ENCODE measurements at regions of chr17 and their contacts with region 1.

Region 1: DNA sequence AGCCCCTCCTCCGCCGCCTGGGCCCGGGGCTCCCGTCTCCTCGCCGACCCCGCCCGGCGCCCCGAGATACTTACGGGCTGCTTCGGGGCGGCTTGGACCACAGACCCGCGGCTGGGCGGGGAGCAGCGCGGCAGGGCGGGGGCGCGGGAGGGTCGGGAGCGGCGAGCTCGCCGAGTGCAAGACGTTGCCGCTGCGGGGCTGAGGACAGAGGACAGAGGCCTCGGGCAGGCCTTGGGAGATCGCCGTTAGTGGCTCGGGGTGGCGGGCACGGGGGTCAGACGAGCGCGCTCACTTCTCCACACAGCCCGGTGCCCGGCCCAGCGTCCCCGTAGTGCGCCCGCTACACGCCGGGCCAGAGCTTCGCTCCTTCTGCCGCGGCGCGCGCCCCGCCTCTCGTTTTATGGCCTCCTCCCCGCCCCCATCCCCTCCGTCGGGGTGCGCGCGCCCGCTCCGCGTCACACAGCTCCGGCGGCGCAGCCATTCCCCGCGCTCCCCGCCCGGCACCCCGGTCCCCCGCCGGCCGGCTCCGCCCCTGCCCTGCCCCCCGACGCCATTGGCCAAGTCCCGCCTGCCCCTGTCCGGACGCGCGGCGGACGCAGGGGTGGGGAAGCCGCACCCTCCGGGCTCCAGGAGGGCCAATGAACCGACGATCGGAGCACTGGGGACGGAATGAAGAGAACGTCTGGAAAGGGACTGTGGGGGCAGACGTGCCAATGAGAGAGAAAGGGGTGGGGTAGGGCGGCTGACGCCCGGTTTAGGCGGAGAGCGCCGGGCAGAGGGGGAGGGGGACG is at the start of gene TOB1:
- DNase-seq: peak; percentile 98
- H3K4me3 Mint-ChIP-seq: peak within 1 kb of the TSS; percentile 100
- H3K27ac Mint-ChIP-seq: peak within 1 kb of the TSS; percentile 99
- H3K4me1 Mint-ChIP-seq: peaks cover 43% of the 10 kb centered on the region
- H3K27me3 Mint-ChIP-seq: no peaks in the 10 kb centered on the region
- total RNA-seq, gene TOB1: 42.3 to 44.1 TPM

Region 2: DNA sequence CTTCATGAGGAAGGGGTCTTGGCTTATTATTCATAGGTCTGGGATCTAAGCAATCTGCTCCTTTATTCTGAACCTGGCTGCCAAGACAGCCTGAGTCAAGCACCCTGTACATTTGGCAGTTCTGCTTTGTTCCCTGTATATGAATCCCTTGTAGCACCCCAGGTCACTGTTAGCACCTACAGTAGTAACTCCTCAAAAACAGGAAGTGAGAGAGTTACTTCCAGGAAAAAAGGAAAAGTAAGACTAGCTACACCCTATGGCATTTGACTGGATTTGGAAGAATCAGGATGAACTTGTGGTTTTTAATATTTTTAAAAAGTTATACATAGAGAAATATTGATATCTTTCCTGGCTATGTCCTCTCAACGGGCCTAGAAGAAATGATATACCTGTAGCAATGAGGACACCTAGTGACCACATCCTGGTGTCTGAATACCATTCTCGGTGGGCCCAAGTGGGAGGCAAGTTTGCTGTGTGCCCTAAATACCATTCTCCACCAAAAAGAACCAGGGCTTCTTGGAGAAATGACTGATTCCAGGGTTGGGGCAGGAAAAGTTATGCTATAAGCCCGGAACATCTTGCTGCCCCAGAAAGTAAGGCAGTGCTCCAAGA is 168.4 kb before region 1 on chr17:
- CTCF ChIA-PET with region 1: no interaction called
- POLR2A ChIA-PET with region 1: no interaction called
- intact Hi-C with region 1: no loop called
- DNase-seq: no peak
- H3K4me3 Mint-ChIP-seq: no peak overlapping the region
- H3K27ac Mint-ChIP-seq: peak overlapping the region; percentile 38
- H3K4me1 Mint-ChIP-seq: peaks cover 22% of the 10 kb centered on the region
- H3K27me3 Mint-ChIP-seq: no peaks in the 10 kb centered on the region

Region 3: DNA sequence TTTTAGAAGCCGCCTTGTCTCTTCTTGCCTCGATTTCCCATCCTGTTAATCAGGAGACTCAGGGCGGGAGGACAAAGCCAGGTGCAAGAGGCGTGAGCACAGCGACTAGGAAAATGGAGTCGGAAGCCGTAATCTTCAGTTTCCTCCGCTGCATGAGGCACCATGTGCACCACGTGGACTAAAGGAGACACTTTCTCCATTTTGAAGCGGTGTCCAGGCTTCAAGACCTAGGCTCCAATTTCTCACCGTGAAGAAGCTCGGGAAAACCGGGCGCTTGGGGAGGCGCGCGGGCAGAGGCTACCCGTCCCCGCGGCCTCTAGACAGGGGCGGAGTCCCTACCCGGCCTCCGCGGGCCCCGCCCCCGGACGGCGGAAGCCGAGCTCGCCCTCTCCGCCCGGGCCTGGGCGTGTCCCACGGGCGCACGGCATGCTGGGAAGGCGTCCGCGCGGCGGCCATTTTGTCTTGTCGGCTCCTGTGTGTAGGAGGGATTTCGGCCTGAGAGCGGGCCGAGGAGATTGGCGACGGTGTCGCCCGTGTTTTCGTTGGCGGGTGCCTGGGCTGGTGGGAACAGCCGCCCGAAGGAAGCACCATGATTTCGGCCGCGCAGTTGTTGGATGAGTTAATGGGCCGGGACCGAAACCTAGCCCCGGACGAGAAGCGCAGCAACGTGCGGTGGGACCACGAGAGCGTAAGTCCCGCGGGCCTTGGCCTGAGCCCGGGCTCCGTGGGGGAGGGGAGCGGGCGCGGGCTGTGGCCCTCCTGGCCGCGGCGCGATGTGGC is 146.8 kb before region 1 on chr17 and contains the start of gene LUC7L3:
- CTCF ChIA-PET with region 1: no interaction called
- POLR2A ChIA-PET with region 1: interaction called, 5 read pairs
- intact Hi-C with region 1: loop called (anchors 2 kb)
- DNase-seq: peak; percentile 96
- H3K4me3 Mint-ChIP-seq: peak within 1 kb of the TSS; percentile 97
- H3K27ac Mint-ChIP-seq: peak within 1 kb of the TSS; percentile 98
- H3K4me1 Mint-ChIP-seq: peaks cover 26% of the 10 kb centered on the region
- H3K27me3 Mint-ChIP-seq: no peaks in the 10 kb centered on the region
- total RNA-seq, gene LUC7L3: 120 to 137 TPM

Region 4: GRCh38 chr17:50904521-50905459 is 38.6 kb after region 1 on chr17:
- CTCF ChIA-PET with region 1: interaction called, 5 read pairs
- POLR2A ChIA-PET with region 1: interaction called, 44 read pairs
- intact Hi-C with region 1: no loop called
- DNase-seq: no peak
- H3K4me3 Mint-ChIP-seq: no peak overlapping the region
- H3K27ac Mint-ChIP-seq: peak overlapping the region; percentile 89
- H3K4me1 Mint-ChIP-seq: peaks cover 55% of the 10 kb centered on the region
- H3K27me3 Mint-ChIP-seq: no peaks in the 10 kb centered on the region

Region 5: DNA sequence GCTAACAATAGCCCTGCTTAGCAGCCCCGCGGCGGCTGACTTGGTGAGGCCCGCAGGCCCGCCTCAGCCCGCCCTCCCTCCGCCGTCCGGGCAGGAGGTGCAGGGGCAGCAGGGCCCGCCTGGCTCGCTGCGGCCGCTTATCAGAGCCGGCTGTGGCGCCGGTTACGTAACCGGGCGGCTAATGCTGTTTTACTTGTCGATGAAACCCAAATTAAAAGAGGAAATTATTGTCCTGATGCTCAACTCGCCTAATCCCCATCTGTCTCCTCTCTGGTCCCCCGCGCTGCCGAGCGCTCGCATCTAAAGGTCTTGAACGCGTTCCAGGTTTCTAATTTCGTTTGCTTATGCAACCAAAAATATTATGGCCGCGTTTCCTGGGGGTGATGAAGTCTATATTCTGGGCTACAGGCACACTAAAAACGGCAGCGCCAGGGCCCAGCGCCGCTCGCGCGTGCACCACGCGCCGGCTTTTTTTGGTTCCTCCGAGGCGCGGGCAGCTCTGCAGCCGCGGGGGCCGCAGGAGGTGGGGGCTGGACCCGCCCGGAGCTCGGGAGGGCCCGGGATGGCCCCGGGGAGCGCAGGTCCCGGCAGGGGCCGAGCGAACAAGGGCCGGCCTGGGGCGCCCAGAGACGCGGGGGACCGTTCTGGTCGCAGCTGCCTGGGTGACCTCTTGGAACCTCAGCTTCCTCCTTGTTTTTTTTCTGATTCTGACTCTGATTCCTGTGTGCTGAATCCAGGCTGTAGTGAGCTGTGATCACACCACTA is 65.1 kb after region 1 on chr17:
- CTCF ChIA-PET with region 1: interaction called, 3 read pairs
- POLR2A ChIA-PET with region 1: interaction called, 31 read pairs
- intact Hi-C with region 1: no loop called
- DNase-seq: peak; percentile 66
- H3K4me3 Mint-ChIP-seq: peak overlapping the region; percentile 75
- H3K27ac Mint-ChIP-seq: peak overlapping the region; percentile 62
- H3K4me1 Mint-ChIP-seq: peaks cover 15% of the 10 kb centered on the region
- H3K27me3 Mint-ChIP-seq: no peaks in the 10 kb centered on the region

Region 6: DNA sequence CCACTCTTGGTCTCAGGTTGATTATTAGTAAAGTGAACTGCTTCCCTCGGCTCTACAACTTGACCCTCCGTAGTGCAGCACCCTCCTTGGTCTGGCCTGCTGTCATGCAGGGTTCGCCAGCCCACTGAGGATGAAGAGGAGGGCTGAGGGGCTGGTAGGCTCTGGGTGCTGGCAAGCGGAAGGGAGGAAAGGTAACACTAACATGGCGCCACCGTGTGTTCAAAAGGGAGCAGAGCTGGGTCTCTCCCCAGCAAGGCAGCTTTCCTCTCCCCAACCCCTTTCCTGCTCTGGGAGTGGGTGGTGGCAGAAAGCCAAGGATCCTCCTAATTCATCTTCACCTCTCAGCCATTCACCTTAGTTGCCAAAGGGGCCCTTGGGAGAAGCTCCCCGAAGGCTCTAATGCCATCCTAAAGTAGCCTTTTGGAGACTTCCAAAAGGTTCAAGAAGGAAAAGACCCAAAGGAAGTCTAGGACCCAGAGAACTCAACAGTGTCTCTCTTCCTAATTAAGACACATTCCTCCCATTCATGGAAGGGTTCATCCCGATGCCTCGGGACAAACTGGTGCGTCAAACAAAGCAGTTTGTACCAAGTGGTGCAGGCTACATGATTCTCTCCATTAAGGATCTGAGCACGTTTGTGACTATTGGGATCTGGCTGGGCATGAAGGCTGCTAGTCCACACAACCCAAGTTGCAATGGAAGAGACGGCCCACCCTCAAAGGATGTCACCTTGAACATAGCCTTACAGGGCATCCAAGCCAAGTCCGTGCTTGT is 90.8 kb after region 1 on chr17:
- CTCF ChIA-PET with region 1: interaction called, 153 read pairs
- POLR2A ChIA-PET with region 1: interaction called, 11 read pairs
- intact Hi-C with region 1: loop called (anchors 1 kb)
- DNase-seq: peak; percentile 77
- H3K4me3 Mint-ChIP-seq: no peak overlapping the region
- H3K27ac Mint-ChIP-seq: peak overlapping the region; percentile 44
- H3K4me1 Mint-ChIP-seq: peaks cover 2% of the 10 kb centered on the region
- H3K27me3 Mint-ChIP-seq: no peaks in the 10 kb centered on the region

Region 7: GRCh38 chr17:51029568-51030463 is 163.6 kb after region 1 on chr17:
- CTCF ChIA-PET with region 1: no interaction called
- POLR2A ChIA-PET with region 1: no interaction called
- intact Hi-C with region 1: no loop called
- DNase-seq: no peak
- H3K4me3 Mint-ChIP-seq: peak overlapping the region; percentile 41
- H3K27ac Mint-ChIP-seq: peak overlapping the region; percentile 71
- H3K4me1 Mint-ChIP-seq: peaks cover 28% of the 10 kb centered on the region
- H3K27me3 Mint-ChIP-seq: no peaks in the 10 kb centered on the region

Region 8: DNA sequence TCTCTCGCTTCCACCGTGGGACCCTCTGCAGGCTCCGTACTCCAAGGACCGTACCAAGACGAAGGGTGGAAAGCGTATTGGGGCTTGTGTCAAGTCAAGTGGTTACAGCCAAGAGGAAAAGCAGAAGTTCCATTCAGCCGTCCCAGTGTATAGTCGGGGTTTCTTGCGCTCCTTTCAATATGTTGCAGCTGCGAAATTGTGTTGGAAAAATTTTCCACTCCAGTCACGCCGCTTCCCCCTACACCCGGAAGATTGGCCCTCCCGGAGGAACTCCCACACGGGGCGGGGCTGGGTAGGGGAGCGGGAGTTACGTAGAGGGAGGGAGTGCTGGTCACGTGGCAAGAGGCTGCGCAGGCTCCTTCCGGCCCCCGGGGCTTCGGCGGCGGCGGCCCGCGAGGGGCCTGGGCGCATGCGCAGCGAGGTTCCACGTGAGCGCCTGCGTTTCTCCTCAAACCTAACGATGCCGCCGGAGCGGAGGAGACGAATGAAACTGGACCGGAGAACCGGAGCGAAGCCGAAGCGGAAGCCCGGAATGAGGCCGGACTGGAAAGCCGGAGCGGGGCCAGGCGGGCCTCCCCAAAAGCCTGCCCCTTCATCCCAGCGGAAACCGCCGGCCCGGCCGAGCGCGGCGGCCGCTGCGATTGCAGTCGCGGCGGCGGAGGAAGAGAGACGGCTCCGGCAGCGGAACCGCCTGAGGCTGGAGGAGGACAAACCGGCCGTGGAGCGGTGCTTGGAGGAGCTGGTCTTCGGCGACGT is 394.1 kb after region 1 on chr17 and contains the start of gene UTP18:
- CTCF ChIA-PET with region 1: no interaction called
- POLR2A ChIA-PET with region 1: no interaction called
- intact Hi-C with region 1: loop called (anchors 2 kb)
- DNase-seq: peak; percentile 97
- H3K4me3 Mint-ChIP-seq: peak within 1 kb of the TSS; percentile 83
- H3K27ac Mint-ChIP-seq: peak within 1 kb of the TSS; percentile 98
- H3K4me1 Mint-ChIP-seq: peaks cover 63% of the 10 kb centered on the region
- H3K27me3 Mint-ChIP-seq: no peaks in the 10 kb centered on the region
- total RNA-seq, gene UTP18: 65.5 to 68.5 TPM